K562 (cell line): ENCODE measurements at regions of chr6 and their contacts with region 1.

Region 1: DNA sequence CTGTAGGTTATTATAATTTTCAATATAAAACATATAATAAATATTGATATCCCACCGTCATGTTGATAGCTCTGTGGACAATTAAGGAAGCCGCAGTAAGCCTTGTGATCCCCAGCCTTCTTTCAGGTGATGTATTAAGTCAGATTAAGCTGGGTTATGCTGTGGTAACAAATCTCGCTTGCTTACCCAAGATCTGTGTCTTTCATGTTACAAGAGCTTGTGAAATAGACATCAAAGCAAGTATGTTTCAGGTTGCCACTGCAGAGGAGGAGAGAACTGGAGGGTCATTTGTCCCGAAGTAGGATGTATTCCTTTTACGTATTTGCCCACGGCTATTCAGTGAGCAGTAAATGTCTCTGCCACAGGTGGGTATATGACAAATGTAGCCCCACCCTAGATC is 17.8 kb upstream of the BCKDHB start:
- DNase-seq: no peak
- ATAC-seq: no peak
- H3K4me3 ChIP-seq: no peak overlapping the region
- H3K27ac ChIP-seq: no peak overlapping the region
- H3K4me1 ChIP-seq: no peaks in the 10 kb centered on the region; a peak in 1 of 5 replicates
- H3K27me3 ChIP-seq: 0 out of 5 replicates have a peak, but pooled peaks cover 0 to 3% of the 10 kb centered on the region in 2 experiments
- CTCF ChIP-seq: no peak
- EP300 ChIP-seq: no peak
- POLR2A ChIP-seq: no peak
- RAD21 ChIP-seq: no peak

Region 2: GRCh38 chr6:79964607-79965081 is 124.0 kb before region 1 on chr6:
- CTCF ChIA-PET with region 1: no interaction called
- POLR2A ChIA-PET with region 1: no interaction called
- in situ Hi-C with region 1: loop called (anchors 10 kb)
- intact Hi-C with region 1: no loop called
- DNase-seq: no peak
- ATAC-seq: no peak
- H3K4me3 ChIP-seq: no peak overlapping the region
- H3K27ac ChIP-seq: no peak overlapping the region
- H3K4me1 ChIP-seq: no peaks in the 10 kb centered on the region
- H3K27me3 ChIP-seq: no peaks in the 10 kb centered on the region
- CTCF ChIP-seq: no peak
- EP300 ChIP-seq: no peak
- POLR2A ChIP-seq: no peak
- RAD21 ChIP-seq: no peak

Region 3: GRCh38 chr6:79993012-79993910 is 95.4 kb before region 1 on chr6:
- CTCF ChIA-PET with region 1: no interaction called
- POLR2A ChIA-PET with region 1: no interaction called
- in situ Hi-C with region 1: no loop called
- intact Hi-C with region 1: no loop called
- DNase-seq: no peak
- ATAC-seq: no peak
- H3K4me3 ChIP-seq: no peak overlapping the region
- H3K27ac ChIP-seq: no peak overlapping the region
- H3K4me1 ChIP-seq: no peaks in the 10 kb centered on the region
- H3K27me3 ChIP-seq: 0 out of 5 replicates have a peak, but pooled peaks cover 0 to 3% of the 10 kb centered on the region in 2 experiments
- CTCF ChIP-seq: no peak
- EP300 ChIP-seq: no peak
- POLR2A ChIP-seq: no peak
- RAD21 ChIP-seq: no peak

Region 4: DNA sequence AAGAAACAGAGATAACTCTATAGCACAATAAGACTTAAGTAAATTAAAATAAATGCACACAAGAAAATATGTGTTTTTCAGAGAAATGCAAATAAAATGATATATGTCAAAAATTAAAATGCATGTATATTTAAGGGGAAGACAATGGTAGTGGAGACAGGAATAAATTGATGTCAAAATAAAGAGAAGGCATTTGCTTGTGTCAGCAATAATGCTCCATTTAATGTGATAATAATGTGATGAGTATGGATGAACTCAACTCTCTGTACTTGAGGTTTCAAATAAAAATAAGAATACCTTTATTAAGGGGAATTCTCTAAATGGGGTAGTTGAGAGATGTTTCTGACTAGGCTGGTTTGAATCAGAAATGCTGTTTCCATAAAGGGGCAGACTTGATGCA is 27.9 kb before region 1 on chr6:
- CTCF ChIA-PET with region 1: no interaction called
- POLR2A ChIA-PET with region 1: no interaction called
- in situ Hi-C with region 1: no loop called
- intact Hi-C with region 1: no loop called
- DNase-seq: no peak
- ATAC-seq: no peak
- H3K4me3 ChIP-seq: no peak overlapping the region
- H3K27ac ChIP-seq: no peak overlapping the region
- H3K4me1 ChIP-seq: no peaks in the 10 kb centered on the region; a peak in 1 of 5 replicates
- H3K27me3 ChIP-seq: peaks cover 3 to 4% of the 10 kb centered on the region in 2 experiments; a peak in 4 of 5 replicates
- CTCF ChIP-seq: no peak
- EP300 ChIP-seq: no peak
- POLR2A ChIP-seq: no peak
- RAD21 ChIP-seq: no peak

Region 5: DNA sequence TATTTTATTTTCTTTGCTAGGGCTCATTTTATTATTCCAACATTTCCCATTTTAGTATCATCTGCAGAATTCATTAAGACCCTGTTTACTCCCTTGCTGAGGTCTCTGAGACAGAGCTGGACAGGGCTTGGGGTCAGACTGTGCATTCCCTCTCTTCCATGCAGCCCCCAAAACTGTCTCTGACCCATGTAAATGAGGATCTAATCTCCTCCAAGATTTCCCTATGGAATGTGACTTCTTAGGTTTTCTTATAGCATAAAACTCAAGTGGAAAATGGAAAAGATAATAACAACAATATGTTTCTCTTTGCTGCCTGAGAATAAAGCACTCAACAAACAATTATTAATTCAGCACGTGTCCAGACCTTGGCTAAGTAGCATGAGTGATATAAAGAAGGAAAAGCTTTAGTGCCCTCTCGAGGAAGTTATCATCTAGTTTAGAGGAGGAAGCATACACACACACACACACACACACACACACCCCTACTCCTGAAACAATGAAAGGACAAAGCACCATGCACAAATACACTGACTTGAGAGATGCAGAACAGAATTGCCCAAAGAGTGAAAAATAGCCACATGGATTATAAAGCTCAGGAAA is 833.3 kb after region 1 on chr6:
- CTCF ChIA-PET with region 1: no interaction called
- POLR2A ChIA-PET with region 1: no interaction called
- in situ Hi-C with region 1: no loop called
- intact Hi-C with region 1: no loop called
- DNase-seq: no peak
- ATAC-seq: no peak
- H3K4me3 ChIP-seq: no peak overlapping the region
- H3K27ac ChIP-seq: no peak overlapping the region
- H3K4me1 ChIP-seq: no peaks in the 10 kb centered on the region
- H3K27me3 ChIP-seq: no peaks in the 10 kb centered on the region
- CTCF ChIP-seq: no peak
- EP300 ChIP-seq: no peak
- POLR2A ChIP-seq: no peak
- RAD21 ChIP-seq: no peak